ENCODE measurements at regions of chr14 and their contacts with region 1.

Region 1: GRCh38 chr14:50860478-50861086 is 11.3 kb upstream of the ABHD12B start:
- DNase-seq: peak; percentile 94
- ATAC-seq: peak; percentile 47
- H3K4me3 Mint-ChIP-seq: peak overlapping the region; percentile 54; the same call in 1 of the 2 replicates
- H3K27ac Mint-ChIP-seq: peak overlapping the region; percentile 78; the same call in 1 of the 2 replicates
- H3K4me1 Mint-ChIP-seq: peaks cover 52% of the 10 kb centered on the region
- H3K27me3 Mint-ChIP-seq: no peaks in the 10 kb centered on the region; the same call in none of the 2 replicates
- CTCF ChIP-seq: peak; percentile 54

Region 2: GRCh38 chr14:50726372-50727107 is 134.0 kb before region 1 on chr14:
- CTCF ChIA-PET with region 1: no interaction called
- POLR2A ChIA-PET with region 1: no interaction called
- DNase-seq: no peak
- ATAC-seq: no peak
- H3K4me3 Mint-ChIP-seq: no peak overlapping the region
- H3K27ac Mint-ChIP-seq: no peak overlapping the region
- H3K4me1 Mint-ChIP-seq: no peaks in the 10 kb centered on the region
- H3K27me3 Mint-ChIP-seq: no peaks in the 10 kb centered on the region
- CTCF ChIP-seq: no peak

Region 3: GRCh38 chr14:50762001-50762930 is 98.3 kb before region 1 on chr14:
- CTCF ChIA-PET with region 1: interaction called, 10 read pairs
- POLR2A ChIA-PET with region 1: no interaction called
- DNase-seq: no peak
- ATAC-seq: no peak
- H3K4me3 Mint-ChIP-seq: no peak overlapping the region
- H3K27ac Mint-ChIP-seq: no peak overlapping the region
- H3K4me1 Mint-ChIP-seq: no peaks in the 10 kb centered on the region
- H3K27me3 Mint-ChIP-seq: no peaks in the 10 kb centered on the region
- CTCF ChIP-seq: no peak

Region 4: GRCh38 chr14:50798048-50798421 is 62.5 kb before region 1 on chr14:
- CTCF ChIA-PET with region 1: interaction called, 14 read pairs
- POLR2A ChIA-PET with region 1: interaction called, 5 read pairs
- DNase-seq: no peak
- ATAC-seq: 0 out of 2 replicates have a peak, but pooled peaks have one; percentile 22
- H3K4me3 Mint-ChIP-seq: no peak overlapping the region
- H3K27ac Mint-ChIP-seq: no peak overlapping the region
- H3K4me1 Mint-ChIP-seq: peaks cover 27% of the 10 kb centered on the region
- H3K27me3 Mint-ChIP-seq: no peaks in the 10 kb centered on the region
- CTCF ChIP-seq: no peak

Region 5: GRCh38 chr14:50830932-50831725 is 29.5 kb before region 1 on chr14 and contains the start of gene NIN:
- CTCF ChIA-PET with region 1: interaction called, 51 read pairs
- POLR2A ChIA-PET with region 1: interaction called, 3 read pairs
- DNase-seq: peak; percentile 66
- ATAC-seq: peak; percentile 87
- H3K4me3 Mint-ChIP-seq: peak within 1 kb of the TSS; percentile 94
- H3K27ac Mint-ChIP-seq: peak within 1 kb of the TSS; percentile 82; the same call in 1 of the 2 replicates
- H3K4me1 Mint-ChIP-seq: peaks cover 31% of the 10 kb centered on the region
- H3K27me3 Mint-ChIP-seq: peaks cover 82% of the 10 kb centered on the region
- CTCF ChIP-seq: no peak
- total RNA-seq, gene NIN: 23.8 to 28.8 TPM (median 26.3 TPM) in 3 replicates

Region 6: DNA sequence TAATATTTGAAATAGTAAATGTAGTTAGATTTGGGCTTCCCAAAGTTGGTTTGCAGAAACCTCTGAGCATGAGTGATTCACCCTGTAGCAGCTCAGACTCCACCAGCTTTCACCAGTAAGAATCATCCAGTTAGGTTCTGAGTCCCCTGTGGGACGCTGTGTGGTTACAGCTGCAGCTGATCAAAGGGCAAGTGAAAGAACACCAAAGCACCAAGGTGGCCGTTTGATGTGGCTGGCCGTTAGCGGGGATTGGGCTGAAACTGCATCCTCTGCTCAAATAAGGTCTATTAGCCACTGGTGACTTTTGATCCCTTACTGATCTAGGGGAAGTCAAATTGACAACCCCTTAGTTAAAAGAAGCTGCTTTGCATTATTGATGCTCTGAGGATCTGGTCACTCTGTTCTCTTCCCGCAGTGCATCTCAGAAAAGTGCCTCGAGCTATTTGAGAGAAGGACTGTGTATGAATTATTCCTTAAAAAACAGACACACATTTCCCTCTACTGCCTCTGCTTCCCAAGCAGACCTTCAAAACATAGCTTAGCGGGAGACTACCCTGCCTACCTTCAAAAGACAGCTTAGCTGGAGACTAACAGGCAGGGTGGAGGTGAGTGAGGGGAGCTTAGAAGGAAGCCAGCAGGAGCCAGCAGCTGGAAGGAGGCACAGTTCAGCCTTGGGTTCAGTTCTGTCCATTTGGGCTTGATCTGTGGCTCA is 14.9 kb after region 1 on chr14:
- CTCF ChIA-PET with region 1: interaction called, 34 read pairs
- POLR2A ChIA-PET with region 1: no interaction called
- DNase-seq: no peak
- ATAC-seq: no peak
- H3K4me3 Mint-ChIP-seq: no peak overlapping the region
- H3K27ac Mint-ChIP-seq: no peak overlapping the region
- H3K4me1 Mint-ChIP-seq: peaks cover 59% of the 10 kb centered on the region
- H3K27me3 Mint-ChIP-seq: peaks cover 35% of the 10 kb centered on the region
- CTCF ChIP-seq: no peak

Region 7: DNA sequence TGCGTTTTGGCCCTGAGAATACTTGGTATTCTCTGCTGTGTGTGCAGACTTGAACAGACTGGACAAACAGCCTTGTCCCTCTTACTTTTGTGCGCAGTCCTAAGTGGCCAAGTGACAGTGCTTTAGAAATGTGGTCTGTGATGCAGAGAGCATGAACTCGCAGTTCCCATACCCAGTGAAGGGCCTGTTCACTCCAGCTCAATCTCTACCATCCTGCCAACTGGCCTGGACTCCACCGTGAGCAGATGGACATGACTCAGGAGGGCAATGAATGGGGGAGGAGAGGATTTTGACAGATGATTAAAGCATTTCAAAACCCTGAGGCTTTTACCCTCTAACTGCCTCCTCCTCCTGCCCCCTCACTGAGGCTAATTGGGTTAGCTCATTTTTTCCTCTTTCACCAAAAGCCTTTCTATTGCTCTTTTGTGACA is 146.2 kb after region 1 on chr14:
- CTCF ChIA-PET with region 1: no interaction called
- POLR2A ChIA-PET with region 1: no interaction called
- DNase-seq: no peak
- ATAC-seq: no peak
- H3K4me3 Mint-ChIP-seq: no peak overlapping the region
- H3K27ac Mint-ChIP-seq: no peak overlapping the region
- H3K4me1 Mint-ChIP-seq: no peaks in the 10 kb centered on the region
- H3K27me3 Mint-ChIP-seq: no peaks in the 10 kb centered on the region
- CTCF ChIP-seq: no peak